Prostate gland (tissue), 2 donors: ENCODE measurements at regions of chr5 and their contacts with region 1.

Region 1: GRCh38 chr5:472656-473553 is 29.9 kb downstream of the EXOC3 start:
- DNase-seq: peak; percentile 71
- H3K4me3 ChIP-seq: peak overlapping the region; percentile 76 to 85
- H3K27ac ChIP-seq: peak overlapping the region; percentile 71
- H3K4me1 ChIP-seq: peaks cover 12% of the 10 kb centered on the region
- H3K27me3 ChIP-seq: no peaks in the 10 kb centered on the region
- CTCF ChIP-seq: peak in 1 of 4 experiments; percentile 5
- POLR2A ChIP-seq: peak; percentile 76

Region 2: DNA sequence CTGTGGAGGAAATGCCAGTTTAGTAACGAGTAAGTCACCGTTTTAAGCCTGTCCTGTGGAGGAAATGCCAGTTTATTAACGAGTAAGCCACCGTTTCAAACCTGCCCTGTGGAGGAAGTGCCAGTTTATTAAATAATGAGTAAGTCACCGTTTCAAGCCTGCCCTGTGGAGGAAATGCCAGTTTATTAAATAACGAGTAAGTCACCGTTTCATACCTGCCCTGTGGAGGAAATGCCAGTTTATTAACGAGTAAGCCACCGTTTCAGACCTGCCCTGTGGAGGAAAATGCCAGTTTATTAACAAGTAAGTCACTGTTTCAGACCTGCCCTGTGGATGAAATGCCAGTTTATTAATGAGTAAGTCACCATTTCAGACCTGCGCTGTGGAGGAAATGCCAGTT is 220.4 kb before region 1 on chr5:
- intact Hi-C with region 1: no loop called
- DNase-seq: no peak
- H3K4me3 ChIP-seq: no peak overlapping the region
- H3K27ac ChIP-seq: no peak overlapping the region
- H3K4me1 ChIP-seq: no peaks in the 10 kb centered on the region
- H3K27me3 ChIP-seq: no peaks in the 10 kb centered on the region
- CTCF ChIP-seq: no peak
- POLR2A ChIP-seq: no peak

Region 3: GRCh38 chr5:611721-612486 is 139.0 kb after region 1 on chr5 and contains the start of gene CEP72:
- intact Hi-C with region 1: loop called (anchors 10 kb)
- DNase-seq: peak; percentile 87
- H3K4me3 ChIP-seq: peak within 1 kb of the TSS; percentile 86 to 88
- H3K27ac ChIP-seq: no peak within 1 kb of the TSS
- H3K4me1 ChIP-seq: no peaks in the 10 kb centered on the region
- H3K27me3 ChIP-seq: peaks cover 5% of the 10 kb centered on the region
- CTCF ChIP-seq: no peak
- POLR2A ChIP-seq: no peak
- total RNA-seq, gene CEP72: 6.4 to 12.8 TPM

Region 4: DNA sequence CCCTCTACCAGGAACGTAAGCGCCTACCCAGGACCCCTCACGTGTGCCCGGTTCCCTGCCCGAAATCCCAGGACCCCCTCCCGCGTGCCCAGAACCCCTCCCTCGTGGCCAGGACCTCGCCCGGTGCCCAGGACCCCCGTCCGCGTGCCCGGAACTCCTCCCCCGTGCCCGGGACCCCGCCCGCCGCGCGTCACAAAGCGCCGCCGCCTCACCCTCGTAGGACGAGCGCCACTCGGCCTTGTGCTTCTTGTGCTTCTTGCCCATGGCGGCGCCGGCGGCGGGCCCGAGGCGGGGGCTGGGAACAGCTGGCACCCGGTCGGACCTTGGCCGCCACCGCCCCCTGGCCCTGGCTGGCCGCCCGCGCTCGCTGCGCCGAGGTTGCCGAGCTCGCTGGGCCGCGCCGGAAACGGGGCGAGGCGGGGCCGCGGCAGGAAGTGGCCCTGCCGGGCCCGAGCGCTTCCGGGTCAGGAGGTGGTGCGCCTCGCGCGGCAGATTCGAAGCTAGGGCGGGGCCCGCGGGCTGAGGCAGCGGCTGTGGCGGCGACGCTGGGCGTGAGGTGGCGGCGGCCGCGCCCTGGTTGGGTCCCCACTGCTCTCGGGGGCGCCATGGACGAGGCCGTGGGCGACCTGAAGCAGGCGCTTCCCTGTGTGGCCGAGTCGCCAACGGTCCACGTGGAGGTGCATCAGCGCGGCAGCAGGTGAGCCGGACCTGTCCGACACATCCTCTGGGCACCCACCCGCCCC is 419.7 kb after region 1 on chr5 and contains the starts of genes BRD9 and TRIP13:
- intact Hi-C with region 1: loop called (anchors 10 kb)
- DNase-seq: peak; percentile 74
- H3K4me3 ChIP-seq: peak within 1 kb of the TSS; percentile 78 to 95
- H3K27ac ChIP-seq: peak within 1 kb of the TSS; percentile 78 to 85
- H3K4me1 ChIP-seq: peaks cover 7% of the 10 kb centered on the region
- H3K27me3 ChIP-seq: no peaks in the 10 kb centered on the region
- CTCF ChIP-seq: peak in 1 of 4 experiments; percentile 42
- POLR2A ChIP-seq: peak; percentile 17
- total RNA-seq, gene BRD9: 17.9 to 46.2 TPM
- total RNA-seq, gene TRIP13: 1.8 to 11.9 TPM